MCF 10A (cell line): ENCODE measurements at regions of chr2 and their contacts with region 1.

Region 1: GRCh38 chr2:43158259-43158880 is 68.0 kb downstream of the ZFP36L2 start:
- DNase-seq: peak; percentile 92
- H3K4me3 Mint-ChIP-seq: peak overlapping the region; percentile 62
- H3K27ac Mint-ChIP-seq: peak overlapping the region; percentile 98
- H3K4me1 Mint-ChIP-seq: peaks cover 57% of the 10 kb centered on the region
- H3K27me3 Mint-ChIP-seq: no peaks in the 10 kb centered on the region
- CTCF ChIP-seq: no peak

Region 2: DNA sequence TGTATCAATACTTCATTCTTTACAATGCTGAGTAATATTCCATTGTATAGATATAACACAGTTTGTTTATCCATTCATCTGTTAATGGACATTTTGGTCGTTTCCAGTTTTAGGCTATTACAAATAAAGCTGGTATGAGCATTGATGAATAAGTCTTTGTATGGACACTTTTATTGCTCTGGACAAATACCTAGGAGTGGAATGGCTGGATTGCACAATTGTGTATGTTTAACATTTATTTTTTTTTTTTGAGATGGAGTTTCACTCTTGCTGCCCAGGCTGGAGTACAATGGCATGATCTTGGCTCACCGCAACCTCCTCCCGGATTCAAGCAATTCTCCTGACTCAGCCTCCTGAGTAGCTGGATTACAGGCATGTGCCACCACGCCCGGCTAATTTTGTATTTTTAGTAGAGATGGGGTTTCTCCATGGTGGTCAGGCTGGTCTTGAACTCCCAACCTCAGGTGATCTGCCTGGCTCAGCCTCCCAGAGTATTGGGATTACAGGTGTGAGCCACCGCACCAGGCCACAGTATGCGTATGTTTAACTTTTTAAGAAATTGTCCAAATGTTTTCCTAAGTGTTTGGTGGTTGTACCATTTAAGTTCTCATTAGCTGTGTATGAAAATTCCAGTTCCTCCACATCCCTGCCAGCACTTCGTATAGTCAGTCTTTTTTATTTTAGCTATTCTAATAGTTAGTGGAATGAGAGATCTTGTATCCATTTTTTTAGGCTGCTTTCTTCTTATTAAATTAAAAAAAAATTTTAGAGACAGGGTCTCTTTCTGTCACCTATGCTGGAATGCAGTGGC is 171.1 kb before region 1 on chr2:
- CTCF ChIA-PET with region 1: no interaction called
- POLR2A ChIA-PET with region 1: no interaction called
- intact Hi-C with region 1: no loop called
- DNase-seq: peak; percentile 88
- H3K4me3 Mint-ChIP-seq: no peak overlapping the region
- H3K27ac Mint-ChIP-seq: peak overlapping the region; percentile 90
- H3K4me1 Mint-ChIP-seq: peaks cover 19% of the 10 kb centered on the region
- H3K27me3 Mint-ChIP-seq: no peaks in the 10 kb centered on the region
- CTCF ChIP-seq: no peak

Region 3: GRCh38 chr2:43178602-43179542 is 20.5 kb after region 1 on chr2:
- CTCF ChIA-PET with region 1: interaction called, 6 read pairs
- POLR2A ChIA-PET with region 1: interaction called, 17 read pairs
- intact Hi-C with region 1: loop called (anchors 1 kb)
- DNase-seq: peak; percentile 95
- H3K4me3 Mint-ChIP-seq: peak overlapping the region; percentile 39
- H3K27ac Mint-ChIP-seq: peak overlapping the region; percentile 99
- H3K4me1 Mint-ChIP-seq: peaks cover 47% of the 10 kb centered on the region
- H3K27me3 Mint-ChIP-seq: no peaks in the 10 kb centered on the region
- CTCF ChIP-seq: no peak

Region 4: GRCh38 chr2:43184339-43184895 is 26.0 kb after region 1 on chr2:
- CTCF ChIA-PET with region 1: interaction called, 3 read pairs
- POLR2A ChIA-PET with region 1: interaction called, 17 read pairs
- intact Hi-C with region 1: loop called (anchors 1 kb)
- DNase-seq: peak; percentile 89
- H3K4me3 Mint-ChIP-seq: no peak overlapping the region
- H3K27ac Mint-ChIP-seq: peak overlapping the region; percentile 92
- H3K4me1 Mint-ChIP-seq: peaks cover 29% of the 10 kb centered on the region
- H3K27me3 Mint-ChIP-seq: no peaks in the 10 kb centered on the region
- CTCF ChIP-seq: no peak